ENCODE measurements at regions of chr17 and their contacts with region 1.

Region 1: GRCh38 chr17:18183334-18184142 is at the start of gene ALKBH5:
- DNase-seq: peak; percentile 96 to 99
- H3K4me3 ChIP-seq: peak within 1 kb of the TSS; percentile 86 to 96
- H3K27ac ChIP-seq: peak within 1 kb of the TSS; percentile 97 to 99
- H3K4me1 ChIP-seq: peaks cover 20 to 24% of the 10 kb centered on the region in 2 donors
- H3K27me3 ChIP-seq: no peaks in the 10 kb centered on the region
- CTCF ChIP-seq: peak in 2 of 3 experiments; percentile 10 to 25
- total RNA-seq, gene ALKBH5: 73.4 TPM

Region 2: DNA sequence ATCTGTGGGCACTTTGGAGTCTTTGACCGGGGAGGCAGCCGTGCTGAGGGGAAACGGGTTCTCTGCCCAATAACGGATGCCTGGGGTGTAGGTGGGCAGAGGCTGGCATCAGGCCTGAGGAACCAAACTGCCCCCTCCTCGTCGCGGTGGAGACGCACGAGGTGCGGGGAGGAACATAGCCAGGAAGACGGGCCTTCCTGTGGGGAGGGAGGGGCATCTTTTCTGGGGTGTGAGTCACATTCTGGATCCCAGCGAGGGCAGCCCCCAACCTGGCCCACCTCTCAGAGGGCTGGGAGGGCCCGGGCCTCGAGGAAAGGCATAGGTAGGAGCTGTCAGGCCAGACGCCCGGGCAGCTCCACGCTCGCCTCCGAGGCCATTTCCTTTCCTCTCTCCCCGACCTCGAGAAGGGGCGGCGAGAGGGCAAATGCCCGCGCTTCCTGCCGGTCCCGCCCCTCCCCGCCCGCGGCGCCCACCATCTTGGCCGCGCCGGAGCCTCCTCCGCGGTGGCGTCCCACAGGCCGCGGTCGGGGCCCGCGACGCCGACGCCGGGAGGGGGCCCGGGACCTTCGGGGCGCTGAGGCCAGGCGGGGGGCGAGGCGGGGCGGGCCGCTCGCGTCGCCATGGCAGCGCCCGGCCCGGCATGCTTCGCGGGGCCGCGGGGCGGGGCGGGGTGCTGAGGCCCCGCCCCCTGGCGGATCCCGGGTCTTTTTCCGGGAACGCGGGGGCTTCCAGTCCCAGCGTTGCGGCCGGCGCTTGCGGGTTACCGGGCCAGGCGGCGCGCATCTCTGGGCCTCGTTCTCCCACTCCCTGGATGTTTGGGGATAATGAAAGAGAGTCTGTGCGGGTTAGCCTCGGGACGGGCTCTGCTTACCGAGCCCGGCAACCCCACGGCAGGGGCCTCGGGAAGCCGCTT is 489.1 kb before region 1 on chr17:
- intact Hi-C with region 1: loop called (anchors 10 kb)
- DNase-seq: peak; percentile 48 to 88
- H3K4me3 ChIP-seq: peak overlapping the region; percentile 71 to 78
- H3K27ac ChIP-seq: peak overlapping the region; percentile 98 to 99
- H3K4me1 ChIP-seq: peaks cover 6 to 51% of the 10 kb centered on the region in 2 donors
- H3K27me3 ChIP-seq: no peaks in the 10 kb centered on the region
- CTCF ChIP-seq: no peak

Region 3: GRCh38 chr17:18087610-18088491 is 95.7 kb before region 1 on chr17 and contains the start of gene DRG2:
- intact Hi-C with region 1: loop called (anchors 5 kb)
- DNase-seq: peak; percentile 40 to 95
- H3K4me3 ChIP-seq: peak within 1 kb of the TSS; percentile 90 to 95
- H3K27ac ChIP-seq: peak within 1 kb of the TSS; percentile 83 to 85
- H3K4me1 ChIP-seq: peaks cover 5 to 13% of the 10 kb centered on the region in 2 donors
- H3K27me3 ChIP-seq: no peaks in the 10 kb centered on the region
- CTCF ChIP-seq: peak in 1 of 3 experiments; percentile 16
- total RNA-seq, gene DRG2: 118 TPM

Region 4: GRCh38 chr17:18158022-18158600 is 25.4 kb before region 1 on chr17:
- intact Hi-C with region 1: loop called (anchors 1 kb)
- DNase-seq: peak; percentile 77 to 95
- H3K4me3 ChIP-seq: peak overlapping the region; percentile 49 to 61
- H3K27ac ChIP-seq: peak overlapping the region; percentile 64 to 65
- H3K4me1 ChIP-seq: peaks cover 0 to 8% of the 10 kb centered on the region in 2 donors
- H3K27me3 ChIP-seq: no peaks in the 10 kb centered on the region
- CTCF ChIP-seq: no peak

Region 5: DNA sequence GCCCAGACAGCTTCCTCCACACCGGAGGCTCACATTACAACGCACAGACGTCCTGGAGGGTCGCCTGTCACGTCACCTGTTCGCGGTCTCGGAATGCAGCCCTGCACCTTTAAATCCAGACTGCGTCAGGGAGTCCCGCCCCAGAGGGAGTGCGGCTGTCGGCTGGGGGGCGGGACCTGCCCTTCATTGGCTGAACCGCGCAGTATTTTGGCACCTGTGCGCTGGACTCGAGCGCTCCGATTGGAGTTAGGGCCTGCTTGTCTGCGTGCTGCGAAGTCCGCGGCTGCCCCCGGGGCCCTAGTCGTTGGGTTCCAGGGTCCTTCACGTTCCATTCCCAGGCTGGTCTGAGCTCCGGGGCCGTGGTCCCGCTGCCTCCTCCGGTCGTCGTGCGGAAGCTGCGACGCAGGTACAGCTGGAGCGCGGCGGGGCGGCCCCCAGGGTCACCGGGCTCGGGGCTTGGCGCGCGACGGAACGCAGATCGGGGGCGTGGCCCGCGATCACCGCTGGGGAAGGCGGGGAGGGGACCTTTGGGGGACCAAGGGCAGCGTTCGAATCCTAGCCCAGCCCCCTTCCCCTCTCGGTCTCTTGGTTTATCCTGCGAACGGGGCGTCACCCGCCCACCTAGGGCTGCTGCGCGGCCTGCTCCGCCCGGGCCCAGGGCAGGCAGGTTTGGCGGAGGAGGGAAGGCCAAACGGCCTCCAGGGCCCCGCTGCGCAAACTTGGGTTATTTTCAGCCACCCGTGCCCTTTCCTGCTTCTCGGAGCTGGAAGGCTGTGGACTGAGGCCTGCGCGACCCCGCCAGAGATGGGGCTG is 77.0 kb after region 1 on chr17 and contains the start of gene MIEF2:
- intact Hi-C with region 1: loop called (anchors 1 kb)
- DNase-seq: peak; percentile 84 to 97
- H3K4me3 ChIP-seq: peak within 1 kb of the TSS; percentile 69 to 76
- H3K27ac ChIP-seq: peak within 1 kb of the TSS; percentile 93 to 96
- H3K4me1 ChIP-seq: peaks cover 22 to 44% of the 10 kb centered on the region in 2 donors
- H3K27me3 ChIP-seq: no peaks in the 10 kb centered on the region
- CTCF ChIP-seq: no peak
- total RNA-seq, gene MIEF2: 18.5 TPM